Left ventricle myocardium superior (tissue), 1 donor: ENCODE measurements at regions of chr3 and their contacts with region 1.

Region 1: GRCh38 chr3:101195951-101196713 is 124.2 kb downstream of the IMPG2 start:
- DNase-seq: no peak
- ATAC-seq: peak; percentile 83

Region 2: DNA sequence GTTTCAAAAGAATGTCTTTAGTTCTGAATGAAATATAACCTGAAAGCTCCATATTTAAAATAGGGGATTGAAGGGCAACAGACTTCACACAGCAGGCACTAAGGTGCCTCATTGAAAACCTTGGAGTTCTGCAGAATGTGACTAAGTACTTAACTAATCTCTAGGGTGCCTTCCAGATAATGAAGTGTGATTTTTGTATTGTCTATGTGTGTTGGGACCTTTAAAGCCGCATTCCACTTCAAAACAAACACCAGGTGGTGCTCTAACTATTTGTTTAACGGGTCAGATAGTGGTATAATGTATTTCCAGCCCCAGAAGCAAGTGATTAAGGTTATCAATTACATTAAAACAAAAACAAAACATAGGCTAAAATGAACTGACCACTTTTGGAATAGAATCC is 458.8 kb before region 1 on chr3:
- intact Hi-C with region 1: loop called (anchors 10 kb)
- DNase-seq: no peak
- ATAC-seq: peak; percentile 34

Region 3: DNA sequence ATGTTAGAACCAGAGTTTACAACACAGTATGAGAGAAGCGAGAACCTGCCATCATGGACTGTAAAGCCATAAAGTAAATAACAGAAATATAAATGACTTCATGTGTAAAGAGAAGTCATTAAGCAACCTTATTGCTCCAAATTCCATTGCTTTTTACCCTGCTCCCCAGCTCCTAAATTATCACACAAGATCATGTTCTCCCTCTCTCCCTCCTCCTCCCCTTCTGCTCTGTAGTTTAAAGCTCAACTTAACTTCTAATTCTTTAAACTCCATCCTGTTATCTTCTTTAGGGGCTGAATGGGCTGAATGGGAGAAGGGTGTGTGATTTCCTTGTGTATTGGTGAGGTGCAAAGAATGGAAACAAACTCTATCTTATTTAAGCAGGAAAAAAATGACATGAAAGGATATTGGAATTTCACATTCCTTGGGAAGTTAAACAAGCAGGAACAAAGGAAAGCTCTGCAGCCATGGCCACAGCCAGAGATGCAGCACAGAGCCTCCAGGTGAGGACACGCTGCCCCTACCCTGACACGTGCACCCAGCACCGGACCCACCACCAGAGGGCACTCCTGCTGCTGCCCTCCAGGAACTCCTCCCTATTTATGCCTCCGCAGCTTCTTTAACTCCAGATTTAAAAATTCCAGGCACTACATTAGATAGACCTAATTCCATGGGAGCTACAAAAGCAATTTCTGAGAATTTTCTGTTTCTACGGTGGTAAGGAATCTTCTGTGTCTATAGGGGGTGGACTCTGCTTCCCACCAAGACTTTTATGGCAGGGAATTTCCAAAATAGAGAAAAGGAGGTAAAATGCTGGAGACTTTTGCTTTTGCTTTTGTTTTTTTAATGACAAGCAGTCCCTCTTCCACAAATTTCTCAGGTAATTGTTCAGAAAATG is 126.0 kb before region 1 on chr3:
- intact Hi-C with region 1: loop called (anchors 10 kb)
- DNase-seq: peak; percentile 79
- ATAC-seq: peak; percentile 79